ENCODE measurements at regions of chr20 and their contacts with region 1.

Region 1: DNA sequence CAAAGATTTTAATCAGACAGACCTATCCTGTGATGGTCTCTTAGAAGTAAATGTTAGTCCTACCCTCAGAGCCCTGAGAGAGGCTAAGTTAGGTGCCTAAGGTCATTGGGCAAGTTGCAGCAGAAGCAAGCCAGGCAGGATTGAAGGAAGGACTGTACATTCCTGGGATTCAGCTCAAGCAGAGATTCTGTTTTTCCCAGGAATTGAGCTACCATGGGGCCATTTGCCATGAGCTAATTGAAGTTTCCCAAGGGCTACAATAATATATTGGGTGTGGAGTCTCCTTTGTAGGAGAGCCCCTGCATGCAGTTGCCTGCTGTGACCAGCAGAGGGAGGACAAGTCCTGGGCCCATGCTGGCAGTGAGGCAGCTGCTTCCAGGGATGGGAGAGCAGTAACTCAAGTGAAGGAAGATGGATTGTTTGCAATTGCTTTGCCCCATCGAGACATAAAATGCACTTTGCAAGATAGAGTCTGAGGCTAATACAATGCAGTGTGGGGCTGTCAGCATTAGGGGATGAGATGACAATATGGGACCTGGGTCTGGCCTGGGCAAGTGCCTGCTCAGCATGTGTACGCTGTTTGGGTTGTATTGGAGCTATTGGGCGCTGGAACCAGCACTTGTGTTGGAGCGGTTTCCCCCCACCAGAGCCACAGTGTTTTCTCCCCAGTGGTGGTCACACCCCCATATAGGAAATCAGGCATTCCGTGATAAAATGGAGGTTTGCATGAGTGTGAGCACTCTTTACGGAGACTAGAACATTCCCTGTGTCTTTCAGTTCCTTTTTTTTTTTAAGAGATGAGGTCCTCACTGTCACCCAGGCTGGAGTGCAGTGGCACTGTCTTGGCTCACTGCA is 27.9 kb downstream of the DNMT3B start:
- DNase-seq: peak; percentile 68 to 81
- H3K4me3 ChIP-seq: no peak overlapping the region
- H3K4me1 ChIP-seq: peaks cover 3% of the 10 kb centered on the region
- H3K27me3 ChIP-seq: no peaks in the 10 kb centered on the region

Region 2: DNA sequence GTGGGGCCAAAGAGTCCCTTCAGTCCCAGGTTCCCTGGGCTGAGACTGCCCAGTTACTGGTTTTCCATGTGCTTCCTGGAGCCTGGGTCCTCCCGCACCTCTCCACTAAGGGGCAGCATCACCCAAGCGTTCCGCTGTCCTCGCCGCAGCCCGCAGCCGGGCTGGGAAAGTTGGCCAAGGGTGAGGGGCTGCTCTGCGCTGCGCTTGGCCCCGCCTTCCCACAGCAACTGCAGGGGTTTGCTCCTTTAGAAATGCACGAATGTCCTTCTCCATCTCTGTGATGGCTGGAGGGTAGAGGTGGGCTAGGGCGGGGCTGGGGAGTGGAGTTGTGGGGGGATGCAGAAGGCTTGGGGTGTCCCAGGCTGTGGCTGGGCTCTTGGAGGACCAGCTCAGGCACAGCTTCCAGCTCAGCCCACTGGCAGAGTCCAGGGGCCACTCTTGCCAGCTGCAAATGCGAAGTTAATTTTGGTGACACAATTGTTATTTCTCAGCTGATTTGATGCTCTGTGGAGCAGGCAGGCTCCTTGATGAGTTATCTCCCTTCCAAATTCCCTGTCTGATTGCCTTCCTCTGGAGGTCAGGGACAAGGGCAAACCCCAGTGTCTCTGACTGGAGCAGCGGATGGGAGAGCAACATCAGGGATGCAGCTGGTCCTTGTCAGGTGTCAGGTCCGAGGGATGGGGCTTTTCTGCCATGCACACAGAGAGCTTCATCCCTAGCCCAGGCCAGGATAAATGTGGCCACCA is 268.2 kb before region 1 on chr20:
- in situ Hi-C with region 1: loop called (anchors 10 kb)
- DNase-seq: peak; percentile 69 to 86
- H3K4me3 ChIP-seq: no peak overlapping the region
- H3K4me1 ChIP-seq: no peaks in the 10 kb centered on the region
- H3K27me3 ChIP-seq: no peaks in the 10 kb centered on the region

Region 3: DNA sequence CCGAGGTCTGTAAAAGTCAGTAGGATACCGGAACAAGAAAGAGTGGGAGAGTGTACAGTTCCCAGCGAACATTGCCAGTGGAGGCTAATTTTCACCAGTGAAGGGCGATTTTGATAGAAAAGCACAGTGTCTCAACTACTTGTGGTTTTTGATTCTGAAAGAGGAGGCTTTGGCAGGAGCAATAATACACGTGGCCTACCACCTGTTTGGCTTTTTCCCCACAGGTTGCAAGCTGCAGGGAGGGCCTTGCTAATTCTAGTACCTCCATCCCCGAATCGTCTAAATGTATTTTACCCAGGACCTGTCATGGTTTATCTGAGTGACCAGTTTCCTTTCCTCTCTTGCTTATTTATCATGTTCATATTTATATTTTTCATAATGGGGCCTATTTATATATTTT is 65.3 kb after region 1 on chr20:
- in situ Hi-C with region 1: no loop called
- DNase-seq: no peak
- H3K4me3 ChIP-seq: no peak overlapping the region
- H3K4me1 ChIP-seq: peaks cover 21% of the 10 kb centered on the region
- H3K27me3 ChIP-seq: no peaks in the 10 kb centered on the region

Region 4: GRCh38 chr20:32945710-32946221 is 155.6 kb after region 1 on chr20:
- in situ Hi-C with region 1: loop called (anchors 25 kb)
- DNase-seq: peak in 1 of 2 experiments; percentile 47
- H3K4me3 ChIP-seq: no peak overlapping the region
- H3K4me1 ChIP-seq: no peaks in the 10 kb centered on the region
- H3K27me3 ChIP-seq: peaks cover 13% of the 10 kb centered on the region